Breast epithelium (tissue), 4 donors: ENCODE measurements at regions of chr5 and their contacts with region 1.

Region 1: DNA sequence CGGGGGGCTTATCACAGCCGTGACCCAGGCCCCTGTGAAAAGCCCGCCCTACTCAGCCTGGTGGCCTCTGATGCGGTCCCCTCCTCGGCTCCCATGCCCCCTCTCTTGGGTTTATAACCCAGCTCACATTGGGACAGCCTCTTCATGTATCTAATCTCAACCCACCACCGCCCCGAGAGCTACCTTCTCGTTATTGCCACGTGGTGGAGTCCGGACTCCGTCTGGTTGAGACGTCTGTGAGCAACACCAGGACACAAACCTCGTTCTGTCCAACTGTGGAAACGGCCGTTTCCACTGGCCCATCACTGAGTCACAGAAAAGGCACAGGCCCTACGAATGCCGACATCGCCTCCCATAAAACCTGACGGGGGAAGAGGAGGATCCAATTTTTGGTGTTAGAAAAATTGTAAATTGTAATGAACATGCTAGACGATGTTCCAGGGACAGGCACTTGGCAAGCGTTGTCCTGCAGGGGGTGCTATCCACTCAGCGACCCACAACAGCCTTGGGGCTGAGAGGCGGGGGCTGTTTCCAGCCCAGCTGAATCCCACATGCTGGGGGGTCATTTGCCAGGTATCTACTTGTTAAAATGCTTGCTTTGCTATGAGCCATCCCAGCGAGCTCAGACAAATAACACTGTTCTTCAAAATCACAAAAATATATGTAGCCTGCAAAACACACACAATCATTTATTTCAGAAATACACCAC is 37.3 kb upstream of the N4BP3 start:
- DNase-seq: peak in 1 of 2 donors; percentile 42
- H3K4me3 ChIP-seq: peak overlapping the region in 1 of 3 donors; percentile 34
- H3K27ac ChIP-seq: no peak overlapping the region
- H3K4me1 ChIP-seq: no peaks in the 10 kb centered on the region
- H3K27me3 ChIP-seq: peaks cover 0 to 7% of the 10 kb centered on the region in 2 donors
- CTCF ChIP-seq: peak; percentile 81 to 92 (median 89)
- POLR2A ChIP-seq: no peak

Region 2: DNA sequence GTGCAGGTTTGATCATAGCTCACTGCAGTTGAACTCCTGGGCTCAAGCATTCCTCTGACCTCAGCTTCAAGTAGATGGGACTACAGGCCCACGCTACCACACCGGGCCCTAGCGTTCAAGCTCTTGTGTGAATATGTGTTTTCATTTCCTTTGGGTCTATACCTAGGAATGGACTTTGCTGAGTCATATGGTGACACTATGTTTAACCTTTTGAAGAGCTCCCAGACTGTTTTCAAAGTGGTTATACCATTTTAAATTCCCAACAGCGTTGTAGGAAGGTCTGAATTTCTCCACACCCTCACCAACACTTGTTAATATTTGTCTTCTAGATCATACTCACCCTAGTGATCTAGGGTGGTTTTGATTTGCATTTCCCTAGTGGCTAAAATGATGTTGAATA is 1594.3 kb before region 1 on chr5:
- intact Hi-C with region 1: no loop called
- DNase-seq: no peak
- H3K4me3 ChIP-seq: no peak overlapping the region
- H3K27ac ChIP-seq: no peak overlapping the region
- H3K4me1 ChIP-seq: no peaks in the 10 kb centered on the region
- H3K27me3 ChIP-seq: no peaks in the 10 kb centered on the region
- CTCF ChIP-seq: no peak
- POLR2A ChIP-seq: no peak

Region 3: GRCh38 chr5:178146020-178146820 is 70.2 kb after region 1 on chr5:
- intact Hi-C with region 1: loop called (anchors 10 kb)
- DNase-seq: peak; percentile 76 to 80
- H3K4me3 ChIP-seq: no peak overlapping the region
- H3K27ac ChIP-seq: peak overlapping the region; percentile 46 to 64
- H3K4me1 ChIP-seq: no peaks in the 10 kb centered on the region
- H3K27me3 ChIP-seq: no peaks in the 10 kb centered on the region
- CTCF ChIP-seq: peak; percentile 61 to 88 (median 65)
- POLR2A ChIP-seq: no peak